Activated B cell treated with CpG ODN at 0.5 μM for 24 hours (primary cell): ENCODE measurements at regions of chr1 and their contacts with region 1.

Region 1: GRCh38 chr1:203038891-203039608 is 12.8 kb downstream of the PPFIA4 start:
- DNase-seq: peak; percentile 43
- ATAC-seq: peak; percentile 96
- H3K4me3 Mint-ChIP-seq: no peak overlapping the region
- H3K27ac Mint-ChIP-seq: no peak overlapping the region
- H3K4me1 Mint-ChIP-seq: peaks cover 3% of the 10 kb centered on the region
- H3K27me3 Mint-ChIP-seq: peaks cover 12% of the 10 kb centered on the region
- CTCF ChIP-seq: peak; percentile 95

Region 2: GRCh38 chr1:201877877-201878401 is 1161.1 kb before region 1 on chr1:
- CTCF ChIA-PET with region 1: no interaction called
- POLR2A ChIA-PET with region 1: no interaction called
- intact Hi-C with region 1: no loop called
- DNase-seq: no peak
- ATAC-seq: no peak
- H3K4me3 Mint-ChIP-seq: no peak overlapping the region
- H3K27ac Mint-ChIP-seq: no peak overlapping the region
- H3K4me1 Mint-ChIP-seq: peaks cover 11% of the 10 kb centered on the region
- H3K27me3 Mint-ChIP-seq: no peaks in the 10 kb centered on the region
- CTCF ChIP-seq: no peak

Region 3: DNA sequence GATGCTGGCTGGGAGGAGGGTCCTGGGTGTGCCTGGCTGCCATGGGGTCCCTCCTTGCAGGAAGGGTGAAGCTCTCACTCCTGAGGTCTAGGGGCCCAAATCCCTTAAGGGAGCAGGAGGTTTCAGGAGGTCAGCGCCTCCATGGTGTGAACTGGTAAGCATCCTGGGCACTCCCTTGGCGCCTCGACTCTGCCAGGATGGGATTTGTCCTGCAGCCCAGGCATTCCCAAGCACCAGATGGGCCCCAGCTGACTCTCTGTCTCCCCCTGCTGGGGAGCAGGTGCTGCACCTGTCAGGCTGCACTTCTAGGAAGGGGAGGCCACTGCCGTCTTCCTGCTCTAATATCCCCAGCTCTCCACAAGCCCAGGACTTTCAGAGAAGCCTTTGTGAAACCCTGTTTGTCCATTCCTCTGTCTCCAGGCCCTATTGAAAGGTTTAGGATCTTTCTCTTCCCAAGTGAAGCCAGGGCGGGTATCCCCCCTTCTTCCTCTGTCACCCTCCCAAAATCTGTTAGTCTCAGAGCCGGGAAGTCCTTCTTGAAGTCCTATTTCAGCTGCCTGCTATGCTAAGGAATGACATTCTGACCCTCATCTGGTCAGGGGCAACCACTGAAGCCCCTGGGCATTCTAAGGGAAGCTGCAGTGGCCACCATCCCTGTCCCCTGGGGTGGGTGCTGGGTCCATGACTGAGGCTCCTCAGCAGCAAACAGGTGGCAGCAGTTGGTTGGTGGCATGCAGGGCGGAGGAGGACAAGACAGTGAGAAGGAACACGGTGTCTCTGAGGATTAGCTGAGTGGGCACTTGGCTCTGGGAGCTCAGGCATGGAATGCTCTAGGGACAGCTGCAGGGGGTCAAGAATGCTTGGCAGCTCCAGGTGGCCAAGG is 133.3 kb after region 1 on chr1:
- CTCF ChIA-PET with region 1: interaction called, 11 read pairs
- POLR2A ChIA-PET with region 1: no interaction called
- intact Hi-C with region 1: loop called (anchors 1 kb)
- DNase-seq: no peak
- ATAC-seq: no peak
- H3K4me3 Mint-ChIP-seq: no peak overlapping the region
- H3K27ac Mint-ChIP-seq: no peak overlapping the region
- H3K4me1 Mint-ChIP-seq: peaks cover 8% of the 10 kb centered on the region
- H3K27me3 Mint-ChIP-seq: peaks cover 7% of the 10 kb centered on the region
- CTCF ChIP-seq: no peak

Region 4: DNA sequence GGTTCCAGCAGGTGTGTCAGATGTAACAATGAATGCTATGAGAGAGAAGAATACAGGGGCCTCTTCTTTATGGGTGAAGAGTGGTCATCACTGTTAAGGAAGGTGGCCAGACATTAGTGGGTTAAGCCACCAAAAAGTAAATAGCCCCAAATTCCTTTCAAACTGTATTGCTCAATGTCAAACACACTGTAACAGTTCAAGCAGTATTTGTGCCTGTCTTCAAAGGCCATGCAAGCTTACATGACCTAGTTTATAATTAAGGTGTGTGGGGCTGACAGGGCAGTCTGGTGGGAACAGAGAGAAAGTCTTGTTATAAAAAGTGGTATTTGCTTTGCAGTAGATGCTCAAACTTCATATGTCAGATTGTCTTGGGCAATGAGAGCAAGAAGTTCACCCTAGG is 171.9 kb after region 1 on chr1:
- CTCF ChIA-PET with region 1: interaction called, 81 read pairs
- POLR2A ChIA-PET with region 1: no interaction called
- intact Hi-C with region 1: no loop called
- DNase-seq: no peak
- ATAC-seq: no peak
- H3K4me3 Mint-ChIP-seq: no peak overlapping the region
- H3K27ac Mint-ChIP-seq: no peak overlapping the region
- H3K4me1 Mint-ChIP-seq: no peaks in the 10 kb centered on the region
- H3K27me3 Mint-ChIP-seq: peaks cover 10% of the 10 kb centered on the region
- CTCF ChIP-seq: no peak

Region 5: DNA sequence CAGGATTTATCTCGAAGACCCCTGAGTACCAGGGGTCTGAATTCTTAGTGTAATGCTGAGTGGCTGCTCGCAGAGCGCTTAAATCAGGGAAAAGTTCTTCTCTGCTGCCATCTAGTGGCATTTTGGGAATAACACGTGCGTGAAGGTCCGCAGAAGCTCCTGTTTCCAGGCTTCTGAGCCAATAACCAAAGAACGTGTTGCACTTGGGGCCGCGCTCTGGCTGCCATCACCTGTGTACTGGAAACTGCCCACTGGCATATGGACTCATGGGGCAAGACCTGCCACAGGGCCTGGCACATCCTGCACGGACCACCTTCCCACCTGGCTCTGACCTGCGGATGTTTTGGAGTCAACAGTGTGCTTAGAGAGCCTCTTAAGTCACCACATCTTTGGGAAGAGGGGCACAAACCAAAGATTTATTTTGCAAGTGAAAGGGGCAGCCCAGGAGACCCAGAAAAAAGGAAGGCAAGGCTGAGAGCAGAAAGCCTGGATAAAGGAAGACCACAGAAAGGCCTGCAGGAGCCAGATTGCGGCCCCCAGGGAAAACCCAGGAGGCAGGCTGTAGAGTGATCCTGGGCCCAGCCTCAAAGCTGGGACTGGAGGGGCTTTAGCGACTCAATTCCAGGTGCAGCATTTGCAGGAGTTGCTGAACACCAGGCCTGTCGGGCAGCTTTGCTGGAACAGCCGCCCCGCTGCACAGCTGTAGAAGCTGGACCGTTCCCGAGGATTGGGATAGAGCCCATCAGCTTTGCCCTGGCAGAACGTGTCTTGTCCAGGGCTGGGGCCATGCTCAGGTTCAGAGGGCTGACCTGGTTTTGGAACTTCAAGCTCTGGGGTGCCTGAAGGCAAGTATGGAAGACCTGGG is 177.5 kb after region 1 on chr1:
- CTCF ChIA-PET with region 1: interaction called, 81 read pairs
- POLR2A ChIA-PET with region 1: no interaction called
- intact Hi-C with region 1: no loop called
- DNase-seq: no peak
- ATAC-seq: no peak
- H3K4me3 Mint-ChIP-seq: no peak overlapping the region
- H3K27ac Mint-ChIP-seq: no peak overlapping the region
- H3K4me1 Mint-ChIP-seq: peaks cover 4% of the 10 kb centered on the region
- H3K27me3 Mint-ChIP-seq: peaks cover 15% of the 10 kb centered on the region
- CTCF ChIP-seq: peak; percentile 42

Region 6: DNA sequence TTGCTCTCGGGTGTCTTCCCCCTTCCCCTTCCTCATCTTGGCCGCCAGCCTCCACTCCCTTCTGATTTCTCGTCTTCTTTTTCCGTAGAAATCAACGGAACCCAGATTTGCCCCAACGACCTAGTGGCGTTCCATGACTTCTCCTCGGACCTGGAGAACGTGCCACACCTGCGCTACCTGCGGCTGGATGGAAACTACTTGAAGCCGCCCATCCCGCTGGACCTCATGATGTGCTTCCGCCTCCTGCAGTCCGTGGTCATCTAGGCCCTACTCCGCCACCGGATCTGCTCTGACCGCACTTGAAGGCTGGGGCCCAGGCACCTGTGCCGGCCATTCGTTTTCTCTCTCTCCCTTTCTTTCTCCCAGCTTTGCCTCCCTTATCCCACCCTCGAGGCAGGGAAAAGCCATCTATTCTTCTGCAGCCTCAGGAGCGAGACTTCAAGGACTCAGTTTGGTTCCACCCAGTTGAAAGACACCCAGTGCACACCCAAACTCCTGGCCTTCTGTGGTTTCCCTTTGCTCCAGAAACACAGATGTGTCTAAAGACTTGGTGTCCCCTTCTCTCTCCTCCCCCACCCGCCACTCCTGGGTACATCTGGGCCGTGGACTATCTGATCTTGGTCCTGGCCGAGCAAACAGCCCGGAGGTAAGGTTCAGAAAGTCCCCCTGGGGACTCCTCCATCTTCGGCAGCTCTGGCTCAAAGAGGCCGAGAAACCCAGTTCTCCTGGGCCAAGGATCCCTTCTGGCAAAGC is 447.7 kb after region 1 on chr1:
- CTCF ChIA-PET with region 1: interaction called, 7 read pairs
- POLR2A ChIA-PET with region 1: no interaction called
- intact Hi-C with region 1: loop called (anchors 2 kb)
- DNase-seq: no peak
- ATAC-seq: no peak
- H3K4me3 Mint-ChIP-seq: peak overlapping the region; percentile 83
- H3K27ac Mint-ChIP-seq: no peak overlapping the region
- H3K4me1 Mint-ChIP-seq: peaks cover 5% of the 10 kb centered on the region
- H3K27me3 Mint-ChIP-seq: peaks cover 2% of the 10 kb centered on the region
- CTCF ChIP-seq: no peak